GM12878 (cell line): ENCODE measurements at regions of chr2 and their contacts with region 1.

Region 1: GRCh38 chr2:96208143-96209010 is at the start of gene STARD7:
- DNase-seq: peak; percentile 92
- ATAC-seq: peak; percentile 94
- H3K4me3 ChIP-seq: peak within 1 kb of the TSS; percentile 94
- H3K27ac ChIP-seq: peak within 1 kb of the TSS; percentile 92
- H3K4me1 ChIP-seq: peaks cover 27% of the 10 kb centered on the region
- H3K27me3 ChIP-seq: no peaks in the 10 kb centered on the region
- CTCF ChIP-seq: no peak; a peak in 1 of 6 replicates
- EP300 ChIP-seq: no peak
- POLR2A ChIP-seq: peak; percentile 91
- RAD21 ChIP-seq: no peak
- polyA plus RNA-seq, gene STARD7: 85.4 to 114 TPM

Region 2: DNA sequence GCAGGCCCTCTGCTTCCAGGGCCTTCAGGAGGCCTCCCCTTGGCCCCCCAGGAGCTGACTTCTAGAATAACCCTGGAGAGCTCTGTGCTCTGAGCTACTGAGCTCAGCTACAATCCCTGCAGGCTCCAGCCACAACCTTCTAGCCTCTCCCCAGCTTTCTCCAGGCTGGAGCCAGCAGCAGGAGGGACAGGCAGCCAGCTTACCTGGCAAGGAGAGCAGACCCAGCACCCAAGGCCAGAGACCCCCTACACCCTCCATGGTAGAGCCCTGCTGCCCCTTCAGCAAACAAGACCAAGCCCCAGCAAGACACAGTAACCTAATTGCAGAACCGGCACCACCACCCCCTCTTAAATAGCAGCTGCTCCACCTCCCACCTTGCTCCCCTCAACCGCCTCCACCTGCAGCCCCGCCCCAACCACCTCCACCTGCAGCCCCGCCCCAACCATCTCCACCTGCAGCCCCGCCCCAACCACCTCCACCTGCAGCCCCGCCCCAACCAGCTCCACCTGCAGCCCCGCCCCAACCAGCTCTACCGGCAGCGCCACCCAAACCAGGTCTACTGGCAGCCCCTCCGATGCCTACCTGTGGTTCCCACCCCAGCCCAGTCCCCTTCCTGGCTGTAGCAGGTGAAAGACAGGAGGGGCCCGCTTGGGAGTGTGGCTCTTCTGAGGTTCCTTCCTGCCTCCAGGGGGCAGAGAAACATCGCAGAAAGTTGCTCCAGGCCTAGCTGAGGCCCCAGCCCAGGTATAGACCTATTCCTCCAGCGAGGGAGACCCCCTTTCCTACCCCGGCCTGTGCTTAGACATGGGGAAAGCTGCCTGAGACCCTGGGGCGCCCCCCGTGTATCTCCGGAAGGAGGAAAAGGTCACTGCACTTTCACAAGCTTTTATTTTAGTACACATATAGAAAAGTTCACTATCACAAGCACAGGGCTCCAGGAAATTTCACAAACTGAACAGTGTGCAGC is 69.9 kb before region 1 on chr2 and contains the start of gene ASTL:
- CTCF ChIA-PET with region 1: interaction called, 23 read pairs
- POLR2A ChIA-PET with region 1: interaction called, 12 read pairs
- RAD21 ChIA-PET with region 1: interaction called, 8 read pairs
- SMC1A ChIA-PET with region 1: interaction called, 7 read pairs
- in situ Hi-C with region 1: no loop called
- intact Hi-C with region 1: no loop called
- DNase-seq: no peak
- ATAC-seq: peak; percentile 37
- H3K4me3 ChIP-seq: no peak within 1 kb of the TSS
- H3K27ac ChIP-seq: no peak within 1 kb of the TSS
- H3K4me1 ChIP-seq: peaks cover 13% of the 10 kb centered on the region
- H3K27me3 ChIP-seq: no peaks in the 10 kb centered on the region; a peak in 1 of 4 replicates
- CTCF ChIP-seq: peak; percentile 67 to 92 (median 71)
- EP300 ChIP-seq: no peak
- POLR2A ChIP-seq: no peak
- RAD21 ChIP-seq: peak; percentile 92
- polyA plus RNA-seq, gene ASTL: not detected

Region 3: DNA sequence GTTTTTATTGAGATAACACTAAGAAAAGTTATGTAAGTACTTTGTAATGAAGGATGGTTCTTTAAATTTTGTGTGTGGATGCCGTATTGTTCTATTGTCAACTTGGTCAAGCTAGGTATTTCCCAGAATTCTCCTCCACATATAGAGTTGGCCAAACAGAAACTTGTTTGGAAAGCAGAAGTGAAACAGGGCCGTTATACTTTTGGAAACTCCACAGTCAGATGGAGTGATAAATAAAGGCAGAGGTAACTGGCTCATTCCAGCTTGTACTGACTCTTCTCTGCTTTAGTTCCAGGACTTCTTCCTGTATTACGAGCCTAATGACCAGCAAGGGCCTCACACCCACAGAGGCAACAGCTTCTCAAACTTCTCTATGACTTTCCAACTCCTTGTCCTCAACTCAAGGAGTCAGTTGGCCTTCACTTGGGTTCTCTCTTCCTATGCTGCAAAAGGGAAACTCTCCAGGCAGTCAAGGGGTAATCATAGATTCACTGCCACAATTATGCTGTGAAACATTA is 16.7 kb after region 1 on chr2:
- CTCF ChIA-PET with region 1: interaction called, 15 read pairs
- POLR2A ChIA-PET with region 1: interaction called, 66 read pairs
- RAD21 ChIA-PET with region 1: interaction called, 93 read pairs
- SMC1A ChIA-PET with region 1: interaction called, 116 read pairs
- in situ Hi-C with region 1: no loop called
- intact Hi-C with region 1: loop called (anchors 1 kb)
- DNase-seq: peak; percentile 74
- ATAC-seq: peak; percentile 94
- H3K4me3 ChIP-seq: no peak overlapping the region
- H3K27ac ChIP-seq: peak overlapping the region; percentile 94
- H3K4me1 ChIP-seq: peaks cover 17% of the 10 kb centered on the region
- H3K27me3 ChIP-seq: no peaks in the 10 kb centered on the region
- CTCF ChIP-seq: no peak
- EP300 ChIP-seq: peak; percentile 73 to 85; a peak in 3 of 4 replicates
- POLR2A ChIP-seq: peak; percentile 59; the same call in 1 of the 2 replicates
- RAD21 ChIP-seq: no peak

Region 4: GRCh38 chr2:96241900-96242611 is 33.7 kb after region 1 on chr2:
- CTCF ChIA-PET with region 1: interaction called, 5 read pairs
- POLR2A ChIA-PET with region 1: interaction called, 7 read pairs
- RAD21 ChIA-PET with region 1: interaction called, 13 read pairs
- SMC1A ChIA-PET with region 1: interaction called, 6 read pairs
- in situ Hi-C with region 1: no loop called
- intact Hi-C with region 1: no loop called
- DNase-seq: peak; percentile 78
- ATAC-seq: peak; percentile 98
- H3K4me3 ChIP-seq: peak overlapping the region; percentile 24; the same call in 1 of the 2 replicates
- H3K27ac ChIP-seq: peak overlapping the region; percentile 89
- H3K4me1 ChIP-seq: peaks cover 32% of the 10 kb centered on the region
- H3K27me3 ChIP-seq: no peaks in the 10 kb centered on the region
- CTCF ChIP-seq: no peak
- EP300 ChIP-seq: peak in 1 of 2 experiments; percentile 64; a peak in 1 of 4 replicates
- POLR2A ChIP-seq: peak; percentile 34; the same call in 1 of the 2 replicates
- RAD21 ChIP-seq: 0 out of 2 replicates have a peak, but pooled peaks have one; percentile 17

Region 5: DNA sequence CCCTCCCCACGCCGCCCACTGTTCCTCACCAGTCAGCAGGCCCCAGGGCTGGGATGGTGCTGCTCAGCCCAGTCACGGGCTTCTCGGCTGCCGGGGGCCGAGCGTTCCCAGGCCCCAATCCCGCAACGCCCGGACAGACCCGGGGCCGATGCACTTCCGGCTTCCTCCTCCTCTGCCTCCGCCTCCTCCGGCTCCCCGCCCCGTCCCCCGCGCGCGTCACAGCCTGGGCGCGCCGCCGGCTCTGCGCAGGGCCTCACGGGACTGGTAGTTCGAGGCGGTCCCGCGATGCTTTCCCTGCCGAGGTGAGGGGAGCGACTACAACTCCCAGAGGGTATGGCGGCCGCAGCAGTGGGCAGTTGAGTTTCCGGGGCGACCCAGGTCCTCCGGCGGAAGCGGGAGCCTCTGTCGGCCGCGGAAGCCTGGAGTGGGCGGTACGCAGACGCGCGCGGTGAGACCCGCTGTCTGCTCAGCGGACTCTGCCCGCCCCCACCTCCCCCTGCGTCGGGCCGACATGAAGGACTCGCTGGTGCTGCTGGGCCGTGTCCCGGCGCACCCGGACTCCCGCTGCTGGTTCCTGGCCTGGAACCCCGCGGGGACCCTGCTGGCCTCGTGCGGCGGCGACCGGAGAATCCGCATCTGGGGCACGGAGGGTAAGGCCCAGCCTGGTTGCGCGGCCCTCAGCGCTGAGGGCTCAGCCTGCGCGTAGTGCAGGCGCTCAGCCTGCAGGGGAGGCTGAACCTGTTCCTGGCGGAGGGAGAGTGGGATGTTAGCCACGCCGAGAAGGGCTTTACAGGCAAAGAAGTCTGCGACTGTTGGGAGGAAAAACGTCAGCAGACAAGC is 57.7 kb after region 1 on chr2 and contains the starts of genes CIAO1 and TMEM127:
- CTCF ChIA-PET with region 1: interaction called, 90 read pairs
- POLR2A ChIA-PET with region 1: interaction called, 9 read pairs
- RAD21 ChIA-PET with region 1: interaction called, 10 read pairs
- SMC1A ChIA-PET with region 1: interaction called, 20 read pairs
- in situ Hi-C with region 1: no loop called
- intact Hi-C with region 1: loop called (anchors 1 kb)
- DNase-seq: peak; percentile 90
- ATAC-seq: peak; percentile 94
- H3K4me3 ChIP-seq: peak within 1 kb of the TSS; percentile 98
- H3K27ac ChIP-seq: peak within 1 kb of the TSS; percentile 79
- H3K4me1 ChIP-seq: peaks cover 16% of the 10 kb centered on the region; the same call in 1 of the 2 replicates
- H3K27me3 ChIP-seq: no peaks in the 10 kb centered on the region
- CTCF ChIP-seq: peak; percentile 15 to 44 (median 40); a peak in 4 of 6 replicates
- EP300 ChIP-seq: peak; percentile 9 to 12; a peak in 1 of 4 replicates
- POLR2A ChIP-seq: peak; percentile 92
- RAD21 ChIP-seq: no peak
- polyA plus RNA-seq, gene CIAO1: 8.3 to 15.6 TPM
- polyA plus RNA-seq, gene TMEM127: 2.6 to 3.0 TPM

Region 6: GRCh38 chr2:96336104-96336775 is 127.9 kb after region 1 on chr2:
- CTCF ChIA-PET with region 1: no interaction called
- POLR2A ChIA-PET with region 1: interaction called, 5 read pairs
- RAD21 ChIA-PET with region 1: interaction called, 4 read pairs
- SMC1A ChIA-PET with region 1: interaction called, 5 read pairs
- in situ Hi-C with region 1: no loop called
- intact Hi-C with region 1: loop called (anchors 5 kb)
- DNase-seq: no peak
- ATAC-seq: peak; percentile 3
- H3K4me3 ChIP-seq: peak overlapping the region; percentile 81
- H3K27ac ChIP-seq: peak overlapping the region; percentile 96
- H3K4me1 ChIP-seq: peaks cover 31% of the 10 kb centered on the region
- H3K27me3 ChIP-seq: no peaks in the 10 kb centered on the region
- CTCF ChIP-seq: no peak
- EP300 ChIP-seq: no peak
- POLR2A ChIP-seq: peak; percentile 77
- RAD21 ChIP-seq: no peak